CD4-positive, alpha-beta T cell (primary cell): ENCODE measurements at regions of chr18 and their contacts with region 1.

Region 1: DNA sequence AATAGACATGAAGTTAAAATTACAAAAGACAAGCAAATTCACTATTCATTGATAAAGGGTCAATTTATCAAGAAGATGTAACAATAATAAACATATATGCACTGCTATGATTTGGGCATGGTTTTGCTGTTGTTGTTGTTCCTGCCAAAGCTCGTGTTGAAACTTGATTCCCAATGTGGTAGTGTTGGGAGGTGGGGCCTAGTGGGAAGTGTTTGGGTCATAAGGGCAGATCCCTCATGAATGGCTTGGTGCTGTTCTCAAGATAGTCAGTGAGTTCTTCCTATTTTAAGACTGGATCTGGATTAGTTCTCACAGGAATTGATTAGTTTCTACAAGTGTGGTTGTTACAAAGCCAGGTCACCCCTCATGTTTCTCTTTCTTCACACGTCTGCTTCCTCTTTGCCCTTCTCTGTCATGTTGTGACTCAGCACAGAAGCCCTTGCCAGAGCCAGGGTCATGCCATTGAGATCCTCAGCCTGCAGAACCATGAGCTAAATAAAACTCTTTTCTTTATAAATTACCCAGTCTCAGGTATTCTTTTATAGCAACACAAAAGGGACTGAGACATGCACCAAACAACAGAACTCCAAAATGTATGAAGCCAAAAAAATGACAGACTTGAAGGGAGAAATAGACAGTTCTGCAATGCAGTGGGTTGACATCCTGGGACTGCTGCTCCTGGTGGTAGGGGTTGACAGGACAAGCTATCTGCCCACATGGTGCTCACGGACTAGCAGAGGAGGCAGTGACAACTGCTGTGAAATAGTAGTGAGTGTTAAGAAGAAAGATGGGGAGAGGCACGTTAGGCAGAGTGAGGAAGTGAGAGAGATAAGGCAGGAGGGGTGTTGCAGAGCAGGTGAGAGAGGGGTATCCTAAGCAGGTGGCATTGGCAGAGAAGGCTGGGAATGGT is 18.6 kb upstream of the SKA1 start:
- DNase-seq: peak in 3 of 14 experiments; percentile 13 to 43 (median 37)
- ATAC-seq: peak; percentile 16
- H3K4me3 ChIP-seq: no peak overlapping the region
- H3K4me3 Mint-ChIP-seq: no peak overlapping the region
- H3K27ac ChIP-seq: no peak overlapping the region
- H3K27ac Mint-ChIP-seq: no peak overlapping the region
- H3K4me1 ChIP-seq: peaks cover 6% of the 10 kb centered on the region
- H3K4me1 Mint-ChIP-seq: peaks cover 4% of the 10 kb centered on the region
- H3K27me3 ChIP-seq: peaks cover 3 to 9% of the 10 kb centered on the region in 2 experiments
- H3K27me3 Mint-ChIP-seq: peaks cover 36% of the 10 kb centered on the region
- CTCF ChIP-seq: no peak

Region 2: GRCh38 chr18:49858309-49859020 is 497.8 kb before region 1 on chr18:
- CTCF ChIA-PET with region 1: interaction called, 3 read pairs
- POLR2A ChIA-PET with region 1: no interaction called
- intact Hi-C with region 1: loop called in 1 of 2 experiments (anchors 5 kb)
- DNase-seq: peak; percentile 24 to 74 (median 48)
- ATAC-seq: no peak
- H3K4me3 ChIP-seq: no peak overlapping the region
- H3K4me3 Mint-ChIP-seq: no peak overlapping the region
- H3K27ac ChIP-seq: no peak overlapping the region
- H3K27ac Mint-ChIP-seq: no peak overlapping the region
- H3K4me1 ChIP-seq: peaks cover 9% of the 10 kb centered on the region
- H3K4me1 Mint-ChIP-seq: no peaks in the 10 kb centered on the region
- H3K27me3 ChIP-seq: no peaks in the 10 kb centered on the region
- H3K27me3 Mint-ChIP-seq: no peaks in the 10 kb centered on the region
- CTCF ChIP-seq: peak; percentile 85

Region 3: DNA sequence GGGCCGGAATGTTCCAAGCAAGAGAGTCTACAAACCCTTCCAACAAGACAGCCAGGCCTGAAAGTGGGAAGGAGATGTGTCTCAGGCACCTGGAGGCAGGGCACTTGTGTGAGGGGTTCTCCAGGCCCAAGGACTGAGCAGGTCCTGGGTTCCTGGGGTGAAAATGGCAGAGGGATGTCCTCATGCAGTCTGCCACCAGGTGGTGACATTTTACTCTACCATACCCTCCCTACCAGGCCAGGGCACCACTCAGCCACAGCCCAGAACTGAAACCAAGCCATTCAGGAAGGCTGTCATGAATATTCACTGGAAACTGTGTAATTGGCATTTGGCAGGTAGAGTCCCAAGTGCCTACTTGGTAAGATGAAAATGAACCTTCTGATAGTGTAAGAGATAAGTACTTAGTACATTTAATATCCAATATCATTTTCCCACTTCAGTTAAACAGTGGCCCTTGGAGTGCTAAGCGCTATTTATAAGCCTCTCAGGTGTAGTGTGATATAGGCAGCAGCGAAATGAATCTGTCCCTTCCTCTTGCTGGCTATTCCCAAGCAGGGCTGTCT is 346.4 kb before region 1 on chr18:
- CTCF ChIA-PET with region 1: interaction called, 4 read pairs
- POLR2A ChIA-PET with region 1: no interaction called
- intact Hi-C with region 1: loop called in 1 of 2 experiments (anchors 5 kb)
- DNase-seq: peak in 13 of 14 experiments; percentile 1 to 71 (median 24)
- ATAC-seq: peak; percentile 64
- H3K4me3 ChIP-seq: no peak overlapping the region
- H3K4me3 Mint-ChIP-seq: no peak overlapping the region
- H3K27ac ChIP-seq: no peak overlapping the region
- H3K27ac Mint-ChIP-seq: no peak overlapping the region
- H3K4me1 ChIP-seq: no peaks in the 10 kb centered on the region
- H3K4me1 Mint-ChIP-seq: no peaks in the 10 kb centered on the region
- H3K27me3 ChIP-seq: no peaks in the 10 kb centered on the region
- H3K27me3 Mint-ChIP-seq: no peaks in the 10 kb centered on the region
- CTCF ChIP-seq: peak; percentile 41

Region 4: GRCh38 chr18:50218432-50219197 is 137.7 kb before region 1 on chr18:
- CTCF ChIA-PET with region 1: interaction called, 24 read pairs
- POLR2A ChIA-PET with region 1: interaction called, 7 read pairs
- intact Hi-C with region 1: loop called in 1 of 2 experiments (anchors 2 kb)
- DNase-seq: peak in 12 of 14 experiments; percentile 3 to 65 (median 22)
- ATAC-seq: peak; percentile 54
- H3K4me3 ChIP-seq: no peak overlapping the region
- H3K4me3 Mint-ChIP-seq: no peak overlapping the region
- H3K27ac ChIP-seq: no peak overlapping the region
- H3K27ac Mint-ChIP-seq: no peak overlapping the region
- H3K4me1 ChIP-seq: no peaks in the 10 kb centered on the region
- H3K4me1 Mint-ChIP-seq: no peaks in the 10 kb centered on the region
- H3K27me3 ChIP-seq: peaks cover 5 to 6% of the 10 kb centered on the region in 2 experiments
- H3K27me3 Mint-ChIP-seq: peaks cover 52% of the 10 kb centered on the region
- CTCF ChIP-seq: no peak

Region 5: GRCh38 chr18:50281295-50281971 is 74.9 kb before region 1 on chr18 and contains the start of gene MBD1:
- CTCF ChIA-PET with region 1: interaction called, 6 read pairs
- POLR2A ChIA-PET with region 1: interaction called, 13 read pairs
- intact Hi-C with region 1: loop called (anchors 5 kb)
- DNase-seq: peak; percentile 93 to 100 (median 96)
- ATAC-seq: peak; percentile 90
- H3K4me3 ChIP-seq: peak within 1 kb of the TSS; percentile 93
- H3K4me3 Mint-ChIP-seq: peak within 1 kb of the TSS; percentile 100
- H3K27ac ChIP-seq: peak within 1 kb of the TSS; percentile 84 to 90
- H3K27ac Mint-ChIP-seq: peak within 1 kb of the TSS; percentile 98
- H3K4me1 ChIP-seq: peaks cover 31% of the 10 kb centered on the region
- H3K4me1 Mint-ChIP-seq: peaks cover 38% of the 10 kb centered on the region
- H3K27me3 ChIP-seq: no peaks in the 10 kb centered on the region
- H3K27me3 Mint-ChIP-seq: no peaks in the 10 kb centered on the region
- CTCF ChIP-seq: no peak
- total RNA-seq, gene MBD1: 103 to 107 TPM

Region 6: DNA sequence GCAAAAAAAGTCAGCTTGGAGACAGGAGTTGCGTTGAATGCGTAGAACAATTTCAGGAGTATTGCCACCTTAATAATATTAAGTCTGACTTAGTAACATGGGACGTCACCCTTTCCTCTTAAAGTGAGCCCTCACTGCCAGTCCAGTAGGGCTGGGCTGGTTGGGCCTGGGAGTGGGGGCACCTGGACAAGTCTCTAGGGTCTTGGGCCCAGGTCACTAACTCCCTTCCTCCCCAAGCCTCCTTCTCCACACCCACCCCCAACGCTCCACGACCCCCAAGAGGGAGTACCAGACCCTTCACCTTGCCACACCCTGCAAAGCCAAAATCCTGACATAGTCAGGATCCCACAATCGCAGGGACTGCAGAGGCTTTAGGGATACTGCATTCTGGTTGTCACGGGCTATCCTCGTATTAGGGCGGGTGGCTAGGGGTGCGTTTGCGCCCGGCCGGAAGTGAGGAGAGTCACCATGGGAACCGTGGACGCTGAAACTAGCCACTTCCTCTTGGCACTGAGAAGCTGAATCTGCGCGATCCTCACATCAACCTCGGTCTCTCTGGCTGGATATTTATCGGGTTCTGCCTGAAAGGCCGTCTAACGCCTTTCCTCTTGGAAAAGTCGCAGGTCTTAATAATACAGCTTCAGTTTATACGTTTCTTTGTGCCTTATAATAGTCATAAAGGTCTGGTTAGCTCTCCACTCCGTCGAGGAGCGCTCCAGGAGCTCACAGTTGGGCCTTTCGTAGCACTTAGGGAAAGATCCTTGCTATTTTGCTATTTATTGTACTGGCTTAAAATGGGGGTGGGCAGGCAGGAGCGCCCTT is 58.5 kb before region 1 on chr18:
- CTCF ChIA-PET with region 1: no interaction called
- POLR2A ChIA-PET with region 1: no interaction called
- intact Hi-C with region 1: no loop called
- DNase-seq: peak; percentile 39 to 85 (median 60)
- ATAC-seq: peak; percentile 97
- H3K4me3 ChIP-seq: peak overlapping the region; percentile 51
- H3K4me3 Mint-ChIP-seq: peak overlapping the region; percentile 83
- H3K27ac ChIP-seq: no peak overlapping the region
- H3K27ac Mint-ChIP-seq: no peak overlapping the region
- H3K4me1 ChIP-seq: peaks cover 13% of the 10 kb centered on the region
- H3K4me1 Mint-ChIP-seq: peaks cover 11% of the 10 kb centered on the region
- H3K27me3 ChIP-seq: peaks cover 13 to 17% of the 10 kb centered on the region in 2 experiments
- H3K27me3 Mint-ChIP-seq: peaks cover 40% of the 10 kb centered on the region
- CTCF ChIP-seq: no peak

Region 7: DNA sequence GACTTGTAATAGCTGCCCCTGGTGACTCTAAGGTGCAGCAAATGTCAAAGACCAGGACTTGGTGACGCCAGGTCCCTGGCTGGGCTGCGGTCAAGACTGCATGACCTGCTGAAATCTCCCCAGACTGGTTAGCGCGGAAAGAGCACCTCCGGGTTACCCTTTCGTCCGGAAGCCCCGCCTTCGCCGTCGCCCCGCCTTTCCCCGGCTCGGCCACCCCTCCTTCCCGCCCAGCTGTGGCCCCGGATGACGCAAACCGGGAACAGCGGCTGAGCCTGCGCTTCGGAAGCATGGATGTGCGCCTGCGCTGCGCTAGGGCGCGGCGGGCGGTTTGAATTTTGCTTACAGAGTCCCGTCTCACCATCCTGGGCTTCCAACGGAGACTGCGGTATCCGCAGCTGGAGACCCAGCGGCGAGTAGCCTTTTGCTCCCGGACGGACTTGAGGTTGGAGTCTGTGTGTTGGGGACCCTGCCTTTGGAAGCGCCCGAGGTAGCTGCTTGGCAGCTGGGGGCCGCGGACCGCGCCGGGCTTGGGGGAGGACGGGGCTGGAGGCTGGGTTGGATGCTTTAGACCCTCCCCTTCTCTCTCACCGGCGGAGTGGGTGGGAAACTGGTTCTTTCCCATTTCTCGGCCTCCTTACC is 18.6 kb after region 1 on chr18 and contains the start of gene SKA1:
- CTCF ChIA-PET with region 1: interaction called, 16 read pairs
- POLR2A ChIA-PET with region 1: interaction called, 6 read pairs
- intact Hi-C with region 1: no loop called
- DNase-seq: peak; percentile 84 to 96 (median 90)
- ATAC-seq: peak; percentile 100
- H3K4me3 ChIP-seq: peak within 1 kb of the TSS; percentile 77
- H3K4me3 Mint-ChIP-seq: peak within 1 kb of the TSS; percentile 80
- H3K27ac ChIP-seq: peak within 1 kb of the TSS; percentile 56 to 58
- H3K27ac Mint-ChIP-seq: peak within 1 kb of the TSS; percentile 81
- H3K4me1 ChIP-seq: peaks cover 12% of the 10 kb centered on the region
- H3K4me1 Mint-ChIP-seq: peaks cover 14% of the 10 kb centered on the region
- H3K27me3 ChIP-seq: peaks cover 0 to 3% of the 10 kb centered on the region in 2 experiments
- H3K27me3 Mint-ChIP-seq: no peaks in the 10 kb centered on the region
- CTCF ChIP-seq: no peak
- total RNA-seq, gene SKA1: 0.08 to 0.20 TPM

Region 8: GRCh38 chr18:50441518-50441917 is 85.2 kb after region 1 on chr18:
- CTCF ChIA-PET with region 1: no interaction called
- POLR2A ChIA-PET with region 1: no interaction called
- intact Hi-C with region 1: no loop called
- DNase-seq: no peak
- ATAC-seq: no peak
- H3K4me3 ChIP-seq: no peak overlapping the region
- H3K4me3 Mint-ChIP-seq: no peak overlapping the region
- H3K27ac ChIP-seq: no peak overlapping the region
- H3K27ac Mint-ChIP-seq: no peak overlapping the region
- H3K4me1 ChIP-seq: no peaks in the 10 kb centered on the region
- H3K4me1 Mint-ChIP-seq: no peaks in the 10 kb centered on the region
- H3K27me3 ChIP-seq: peaks cover 0 to 1% of the 10 kb centered on the region in 2 experiments
- H3K27me3 Mint-ChIP-seq: peaks cover 4% of the 10 kb centered on the region
- CTCF ChIP-seq: no peak